Naive thymus-derived CD8-positive, alpha-beta T cell (primary cell): ENCODE measurements at regions of chr22 and their contacts with region 1.

Region 1: DNA sequence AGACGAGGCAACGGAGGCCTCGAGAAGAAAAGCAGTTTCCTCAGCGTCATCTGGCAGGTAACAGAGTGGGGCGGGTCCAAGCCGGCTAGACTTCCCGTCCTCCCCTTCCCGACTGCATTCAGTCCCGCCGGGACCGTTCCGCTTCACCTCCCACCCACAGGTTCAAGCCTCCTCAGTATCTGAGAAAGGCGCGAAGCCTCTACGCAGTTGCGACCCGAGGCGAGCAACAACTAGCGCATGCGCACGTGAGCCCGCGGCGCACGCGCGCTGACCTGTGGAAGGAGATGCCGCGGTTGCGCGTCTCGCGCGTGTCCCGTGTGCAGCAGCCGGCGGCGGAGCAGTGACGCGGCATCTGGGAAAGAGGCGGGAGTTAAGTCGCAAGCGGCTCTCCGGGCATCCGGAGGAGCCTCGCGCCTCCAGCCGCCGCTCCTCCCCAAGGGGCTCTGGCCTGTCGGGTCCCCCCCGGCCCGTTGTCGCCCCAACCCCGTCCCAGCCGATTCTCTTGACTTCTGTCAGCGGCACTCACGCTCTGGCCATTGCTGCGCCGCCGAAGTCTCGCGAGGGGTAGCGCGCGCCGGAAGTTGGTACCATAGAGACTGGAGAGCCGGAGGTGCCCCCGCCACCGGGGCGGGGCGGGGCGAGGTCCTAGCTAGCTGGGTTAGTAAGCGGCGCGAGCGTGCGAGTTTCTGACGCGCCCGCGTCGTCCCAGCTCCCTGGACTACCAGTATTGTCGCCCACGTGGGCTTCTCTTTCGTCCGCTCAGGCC is at the start of gene THAP7:
- DNase-seq: peak; percentile 94 to 99 (median 96)
- ATAC-seq: peak; percentile 88 to 90
- H3K4me3 Mint-ChIP-seq: peak within 1 kb of the TSS; percentile 94 to 98 (median 98)
- H3K27ac Mint-ChIP-seq: peak within 1 kb of the TSS; percentile 98 to 100 (median 99)
- H3K4me1 Mint-ChIP-seq: peaks cover 18 to 49% (median 43%) of the 10 kb centered on the region in 4 donors
- H3K27me3 Mint-ChIP-seq: no peaks in the 10 kb centered on the region
- polyA plus RNA-seq, gene THAP7: 31.7 to 55.5 (median 41.1) TPM

Region 2: DNA sequence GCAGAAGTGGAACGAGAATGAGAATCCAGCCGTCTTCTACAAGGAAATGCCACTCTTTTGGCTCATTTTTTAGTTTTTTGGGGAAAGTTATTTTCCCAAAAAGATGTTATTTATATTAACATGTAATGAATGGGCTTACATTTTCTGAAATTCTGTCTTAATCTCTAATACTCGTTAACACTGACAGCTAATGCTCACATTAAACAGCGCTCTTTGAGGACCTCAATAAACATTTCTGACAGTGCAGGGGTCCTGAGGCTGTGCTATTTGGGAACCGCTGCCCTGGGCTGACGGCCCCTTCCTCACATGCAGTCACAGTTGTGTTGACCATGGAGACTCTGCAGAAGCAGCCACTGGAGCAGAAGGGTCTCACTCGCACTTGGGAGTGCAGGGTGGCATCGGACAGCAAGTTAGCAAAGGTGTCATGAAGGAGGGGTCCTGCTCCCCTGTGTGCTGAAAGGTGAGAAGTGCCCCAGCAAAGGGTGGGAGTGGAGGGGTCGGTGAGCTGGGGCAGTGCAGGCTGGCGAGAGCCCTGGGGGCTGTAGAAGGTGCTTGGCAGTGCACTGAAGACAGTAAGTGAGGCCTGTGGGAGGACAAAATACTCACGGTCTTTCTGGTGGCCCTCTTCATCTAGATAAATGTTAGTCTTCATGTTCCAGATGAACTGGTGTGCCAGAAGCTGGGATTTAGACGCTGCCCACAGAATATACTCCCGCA is 280.9 kb before region 1 on chr22:
- POLR2A ChIA-PET with region 1: no interaction called
- DNase-seq: no peak
- ATAC-seq: no peak
- H3K4me3 Mint-ChIP-seq: no peak overlapping the region
- H3K27ac Mint-ChIP-seq: peak overlapping the region in 6 of 10 donors; percentile 17 to 69 (median 42)
- H3K4me1 Mint-ChIP-seq: peaks cover 0 to 4% (median 0%) of the 10 kb centered on the region in 4 donors
- H3K27me3 Mint-ChIP-seq: no peaks in the 10 kb centered on the region

Region 3: DNA sequence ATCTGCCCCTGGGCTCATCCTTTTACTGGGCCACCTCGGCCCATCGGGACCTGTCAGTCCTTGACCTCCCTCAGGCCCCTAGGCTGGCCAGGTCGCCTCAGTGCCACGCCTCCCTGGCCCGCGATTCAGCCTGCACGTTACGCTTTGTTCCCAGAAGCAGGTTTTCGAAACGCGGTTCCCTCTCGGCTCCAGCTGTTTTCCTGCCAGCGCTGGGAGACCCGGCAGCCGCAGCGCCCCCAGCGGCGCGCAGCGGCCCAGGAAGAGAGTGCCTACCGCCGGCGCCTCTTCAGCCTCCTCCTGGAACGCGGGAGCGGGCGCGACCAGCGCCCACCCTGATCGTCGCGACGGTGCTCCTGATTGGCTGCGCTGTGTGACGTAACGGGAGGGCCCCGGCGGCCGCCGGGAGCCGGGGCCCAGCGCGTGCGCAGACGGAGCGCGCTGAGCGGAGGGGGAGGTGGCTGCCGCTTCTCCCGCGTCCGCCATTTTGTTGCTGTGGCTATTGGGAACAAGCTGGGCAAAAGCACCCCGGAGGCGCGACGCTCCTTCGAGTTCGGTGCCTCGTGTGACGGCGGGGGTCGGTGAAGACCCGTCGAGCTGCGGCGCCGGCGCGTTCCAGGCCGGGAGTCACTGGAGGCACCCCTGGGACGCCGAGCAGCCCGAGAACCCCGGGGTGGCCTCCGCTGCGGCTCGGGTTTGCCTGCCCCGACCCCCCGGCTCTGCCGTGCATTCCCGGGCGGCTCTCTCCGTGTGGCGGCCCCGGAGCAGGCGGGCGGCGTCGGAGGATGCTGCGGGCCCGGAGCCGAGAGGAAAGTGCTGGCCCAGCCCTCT is 84.5 kb before region 1 on chr22 and contains the start of gene CRKL:
- POLR2A ChIA-PET with region 1: no interaction called
- DNase-seq: peak; percentile 89 to 97 (median 96)
- ATAC-seq: peak; percentile 96 to 98
- H3K4me3 Mint-ChIP-seq: peak within 1 kb of the TSS; percentile 74 to 99 (median 96)
- H3K27ac Mint-ChIP-seq: peak within 1 kb of the TSS; percentile 84 to 97 (median 95)
- H3K4me1 Mint-ChIP-seq: peaks cover 14 to 45% (median 41%) of the 10 kb centered on the region in 4 donors
- H3K27me3 Mint-ChIP-seq: no peaks in the 10 kb centered on the region
- polyA plus RNA-seq, gene CRKL: 39.0 to 53.8 (median 40.1) TPM

Region 4: GRCh38 chr22:20981787-20982562 is 19.8 kb before region 1 on chr22 and contains the start of gene LZTR1:
- POLR2A ChIA-PET with region 1: interaction called, 78 read pairs
- DNase-seq: peak; percentile 44 to 78 (median 58)
- ATAC-seq: peak; percentile 78 to 84
- H3K4me3 Mint-ChIP-seq: peak within 1 kb of the TSS; percentile 88 to 97 (median 95)
- H3K27ac Mint-ChIP-seq: peak within 1 kb of the TSS; percentile 88 to 97 (median 94)
- H3K4me1 Mint-ChIP-seq: peaks cover 28 to 52% (median 49%) of the 10 kb centered on the region in 4 donors
- H3K27me3 Mint-ChIP-seq: no peaks in the 10 kb centered on the region
- polyA plus RNA-seq, gene LZTR1: 8.6 to 14.5 (median 12.3) TPM

Region 5: GRCh38 chr22:20989323-20990138 is 12.2 kb before region 1 on chr22:
- POLR2A ChIA-PET with region 1: interaction called, 16 read pairs
- DNase-seq: no peak
- ATAC-seq: no peak
- H3K4me3 Mint-ChIP-seq: peak overlapping the region in 1 of 10 donors; percentile 19
- H3K27ac Mint-ChIP-seq: no peak overlapping the region
- H3K4me1 Mint-ChIP-seq: peaks cover 0 to 18% (median 4%) of the 10 kb centered on the region in 4 donors
- H3K27me3 Mint-ChIP-seq: no peaks in the 10 kb centered on the region

Region 6: GRCh38 chr22:21014202-21014725 is 12.5 kb after region 1 on chr22:
- POLR2A ChIA-PET with region 1: interaction called, 41 read pairs
- DNase-seq: peak; percentile 70 to 92 (median 79)
- ATAC-seq: peak; percentile 89 to 95
- H3K4me3 Mint-ChIP-seq: peak overlapping the region; percentile 78 to 89 (median 87)
- H3K27ac Mint-ChIP-seq: peak overlapping the region; percentile 31 to 98 (median 96)
- H3K4me1 Mint-ChIP-seq: peaks cover 13 to 35% (median 33%) of the 10 kb centered on the region in 4 donors
- H3K27me3 Mint-ChIP-seq: no peaks in the 10 kb centered on the region

Region 7: GRCh38 chr22:21022955-21023942 is 21.5 kb after region 1 on chr22:
- POLR2A ChIA-PET with region 1: interaction called, 14 read pairs
- DNase-seq: no peak
- ATAC-seq: no peak
- H3K4me3 Mint-ChIP-seq: peak overlapping the region in 1 of 10 donors; percentile 55
- H3K27ac Mint-ChIP-seq: peak overlapping the region in 3 of 10 donors; percentile 35 to 61 (median 38)
- H3K4me1 Mint-ChIP-seq: peaks cover 14 to 36% (median 21%) of the 10 kb centered on the region in 4 donors
- H3K27me3 Mint-ChIP-seq: no peaks in the 10 kb centered on the region